ENCODE measurements at regions of chr13 and their contacts with region 1.

Region 1: GRCh38 chr13:94249512-94249911 is 230.0 kb downstream of the DCT start:
- DNase-seq: peak; percentile 61
- H3K4me3 ChIP-seq: no peak overlapping the region
- H3K27ac ChIP-seq: no peak overlapping the region
- H3K4me1 ChIP-seq: peaks cover 15% of the 10 kb centered on the region
- H3K27me3 ChIP-seq: peaks cover 3% of the 10 kb centered on the region
- CTCF ChIP-seq: no peak

Region 2: DNA sequence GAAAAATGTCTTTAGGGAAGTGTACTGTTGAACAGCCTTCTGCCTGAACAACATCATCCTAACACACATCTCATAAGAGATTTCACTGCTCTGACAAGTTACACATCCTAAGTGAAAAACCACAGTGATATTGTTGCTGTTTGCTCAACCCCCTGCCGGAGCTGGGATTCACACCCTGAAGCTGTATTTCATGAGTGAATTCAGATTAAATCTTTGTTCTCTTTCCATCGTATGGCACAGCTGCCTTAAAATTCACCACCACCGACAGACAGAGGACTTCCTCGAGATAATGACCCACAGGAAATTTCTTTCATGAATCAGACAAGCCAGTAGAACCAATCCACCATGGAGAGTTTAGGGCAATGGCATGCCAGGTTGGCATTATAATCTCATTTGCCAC is 50.8 kb before region 1 on chr13:
- CTCF ChIA-PET with region 1: no interaction called
- dilution Hi-C with region 1: no loop called
- in situ Hi-C with region 1: no loop called
- intact Hi-C with region 1: no loop called
- DNase-seq: no peak
- H3K4me3 ChIP-seq: no peak overlapping the region
- H3K27ac ChIP-seq: no peak overlapping the region
- H3K4me1 ChIP-seq: peaks cover 14% of the 10 kb centered on the region
- H3K27me3 ChIP-seq: no peaks in the 10 kb centered on the region
- CTCF ChIP-seq: no peak

Region 3: DNA sequence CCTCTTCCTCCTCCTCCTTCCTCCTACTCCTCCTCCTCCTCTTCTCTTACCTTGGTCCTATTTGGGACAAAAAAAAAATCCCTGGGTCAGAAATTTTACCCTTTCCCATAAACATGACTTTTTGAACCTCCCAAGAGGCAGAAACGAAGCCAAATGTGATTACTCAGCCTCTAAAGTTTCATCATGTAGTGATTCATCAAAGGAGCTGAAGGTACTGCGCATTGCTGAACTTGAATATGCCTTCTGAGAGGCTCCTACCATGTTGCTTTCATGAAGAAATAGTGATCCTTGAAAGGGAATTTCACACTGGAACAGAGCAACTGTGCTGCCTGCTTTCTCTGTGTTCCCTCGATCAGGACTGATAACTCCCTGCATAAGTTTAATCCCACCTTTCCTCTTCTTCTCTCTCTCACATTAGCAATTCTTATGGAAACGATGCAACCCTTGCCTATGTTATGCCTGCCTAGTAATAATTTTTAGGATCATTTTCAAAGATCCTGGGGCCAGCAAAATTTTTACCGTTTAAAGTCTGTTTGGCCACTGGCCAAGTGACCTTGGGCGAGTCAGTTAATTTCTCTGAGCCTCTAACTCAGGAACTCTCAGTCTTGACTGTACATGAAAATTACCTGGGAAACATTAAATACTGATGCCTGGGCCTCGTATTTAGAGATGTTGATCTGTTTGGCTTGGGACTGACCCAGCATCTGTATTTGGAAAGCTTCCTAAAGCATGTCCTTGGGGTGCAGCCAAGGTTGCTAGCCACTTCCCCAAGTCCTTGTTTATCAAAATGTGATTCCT is 80.4 kb after region 1 on chr13:
- CTCF ChIA-PET with region 1: no interaction called
- dilution Hi-C with region 1: no loop called
- in situ Hi-C with region 1: no loop called
- intact Hi-C with region 1: loop called (anchors 5 kb)
- DNase-seq: peak; percentile 88
- H3K4me3 ChIP-seq: no peak overlapping the region
- H3K27ac ChIP-seq: peak overlapping the region; percentile 41
- H3K4me1 ChIP-seq: peaks cover 16% of the 10 kb centered on the region
- H3K27me3 ChIP-seq: no peaks in the 10 kb centered on the region
- CTCF ChIP-seq: no peak

Measured in mammary epithelial cell (primary cell).